ENCODE measurements at regions of chr16 and their contacts with region 1.

Region 1: GRCh38 chr16:70523076-70523742 is at the start of gene COG4:
- DNase-seq: peak; percentile 88 to 93 (median 90)
- ATAC-seq: peak; percentile 75
- H3K4me3 ChIP-seq: peak within 1 kb of the TSS; percentile 75
- H3K27ac ChIP-seq: peak within 1 kb of the TSS; percentile 89
- H3K4me1 ChIP-seq: peaks cover 2 to 18% of the 10 kb centered on the region in 2 experiments; a peak in 4 of 5 replicates
- H3K27me3 ChIP-seq: no peaks in the 10 kb centered on the region
- CTCF ChIP-seq: no peak
- EP300 ChIP-seq: no peak
- POLR2A ChIP-seq: peak; percentile 93
- RAD21 ChIP-seq: no peak
- polyA plus RNA-seq, gene COG4: 13.7 to 37.4 TPM

Region 2: GRCh38 chr16:70331588-70332358 is 191.4 kb before region 1 on chr16:
- CTCF ChIA-PET with region 1: no interaction called
- POLR2A ChIA-PET with region 1: no interaction called
- in situ Hi-C with region 1: no loop called
- intact Hi-C with region 1: no loop called
- DNase-seq: peak in 2 of 4 experiments; percentile 32 to 33
- ATAC-seq: peak; percentile 88
- H3K4me3 ChIP-seq: no peak overlapping the region
- H3K27ac ChIP-seq: no peak overlapping the region
- H3K4me1 ChIP-seq: peaks cover 4% of the 10 kb centered on the region in 2 experiments; a peak in 3 of 5 replicates
- H3K27me3 ChIP-seq: no peaks in the 10 kb centered on the region
- CTCF ChIP-seq: peak; percentile 54 to 60 (median 55)
- EP300 ChIP-seq: no peak
- POLR2A ChIP-seq: no peak
- RAD21 ChIP-seq: peak; percentile 53 to 72

Region 3: GRCh38 chr16:70345840-70346239 is 177.4 kb before region 1 on chr16:
- CTCF ChIA-PET with region 1: no interaction called
- POLR2A ChIA-PET with region 1: interaction called, 10 read pairs
- in situ Hi-C with region 1: no loop called
- intact Hi-C with region 1: no loop called
- DNase-seq: no peak
- ATAC-seq: no peak
- H3K4me3 ChIP-seq: peak overlapping the region; percentile 84
- H3K27ac ChIP-seq: peak overlapping the region; percentile 93
- H3K4me1 ChIP-seq: peaks cover 4 to 6% of the 10 kb centered on the region in 2 experiments; a peak in 4 of 5 replicates
- H3K27me3 ChIP-seq: no peaks in the 10 kb centered on the region
- CTCF ChIP-seq: no peak
- EP300 ChIP-seq: no peak
- POLR2A ChIP-seq: no peak
- RAD21 ChIP-seq: no peak

Region 4: DNA sequence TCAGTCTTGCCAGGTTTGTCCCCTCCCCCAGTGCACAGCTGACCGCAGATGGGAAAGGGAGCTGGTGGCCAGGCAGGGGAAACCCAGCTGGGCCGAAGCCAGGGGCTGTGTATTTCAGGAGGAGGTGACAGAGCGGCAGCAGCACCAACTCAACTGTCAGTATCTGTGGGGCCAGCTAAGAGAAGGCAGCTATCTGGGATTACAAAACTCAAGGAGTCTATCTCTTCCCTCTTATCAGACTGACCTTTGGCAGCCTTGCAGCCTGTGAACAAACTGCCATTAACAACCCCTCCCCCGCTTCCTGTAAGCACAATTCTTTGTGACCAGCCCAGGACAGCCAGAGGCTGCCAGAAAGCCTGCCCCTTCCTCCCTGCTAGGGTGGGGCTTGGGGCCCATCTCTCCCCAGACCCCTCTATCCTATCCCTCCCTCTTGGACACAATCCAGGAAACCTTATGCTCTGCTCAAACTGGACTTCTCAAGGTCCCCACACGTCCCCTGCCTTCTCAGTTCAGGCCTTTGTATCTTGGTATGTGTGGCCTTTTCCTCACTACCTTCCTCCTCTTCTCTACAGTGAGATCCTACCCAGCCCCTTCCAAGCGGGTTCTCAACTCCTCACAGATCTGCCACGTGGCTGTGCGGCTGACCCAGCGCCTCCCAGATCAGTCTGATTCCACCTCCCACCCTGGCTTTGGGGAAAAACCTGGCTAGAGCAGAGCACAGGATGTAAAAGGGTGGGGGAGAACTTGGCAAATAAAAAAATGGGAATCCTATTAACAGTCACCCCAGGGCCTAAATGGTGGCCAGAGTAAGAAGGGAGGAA is 94.8 kb before region 1 on chr16:
- CTCF ChIA-PET with region 1: no interaction called
- POLR2A ChIA-PET with region 1: interaction called, 7 read pairs
- in situ Hi-C with region 1: no loop called
- intact Hi-C with region 1: loop called (anchors 2 kb)
- DNase-seq: peak; percentile 90 to 99 (median 93)
- ATAC-seq: peak; percentile 83
- H3K4me3 ChIP-seq: no peak overlapping the region; the same call in 1 of the 2 replicates
- H3K27ac ChIP-seq: peak overlapping the region; percentile 98
- H3K4me1 ChIP-seq: peaks cover 75 to 78% of the 10 kb centered on the region in 2 experiments
- H3K27me3 ChIP-seq: no peaks in the 10 kb centered on the region
- CTCF ChIP-seq: no peak
- EP300 ChIP-seq: peak; percentile 100
- POLR2A ChIP-seq: peak; percentile 85
- RAD21 ChIP-seq: peak; percentile 41 to 50; a peak in 3 of 4 replicates

Region 5: GRCh38 chr16:70540994-70541393 is 17.8 kb after region 1 on chr16:
- CTCF ChIA-PET with region 1: no interaction called
- POLR2A ChIA-PET with region 1: interaction called, 14 read pairs
- in situ Hi-C with region 1: no loop called
- intact Hi-C with region 1: no loop called
- DNase-seq: no peak
- ATAC-seq: no peak
- H3K4me3 ChIP-seq: no peak overlapping the region
- H3K27ac ChIP-seq: no peak overlapping the region
- H3K4me1 ChIP-seq: no peaks in the 10 kb centered on the region
- H3K27me3 ChIP-seq: no peaks in the 10 kb centered on the region
- CTCF ChIP-seq: no peak
- EP300 ChIP-seq: no peak
- POLR2A ChIP-seq: no peak
- RAD21 ChIP-seq: no peak

Region 6: GRCh38 chr16:70582290-70582978 is 59.2 kb after region 1 on chr16:
- CTCF ChIA-PET with region 1: no interaction called
- POLR2A ChIA-PET with region 1: no interaction called
- in situ Hi-C with region 1: no loop called
- intact Hi-C with region 1: no loop called
- DNase-seq: peak in 2 of 4 experiments; percentile 42 to 52
- ATAC-seq: peak; percentile 76
- H3K4me3 ChIP-seq: no peak overlapping the region
- H3K27ac ChIP-seq: no peak overlapping the region
- H3K4me1 ChIP-seq: peaks cover 5 to 8% of the 10 kb centered on the region in 2 experiments; a peak in 3 of 5 replicates
- H3K27me3 ChIP-seq: peaks cover 0 to 16% of the 10 kb centered on the region in 2 experiments; a peak in 3 of 5 replicates
- CTCF ChIP-seq: peak; percentile 49 to 77 (median 66)
- EP300 ChIP-seq: no peak
- POLR2A ChIP-seq: no peak
- RAD21 ChIP-seq: peak in 1 of 2 experiments; percentile 72; a peak in 3 of 4 replicates

Region 7: GRCh38 chr16:70653809-70654771 is 130.9 kb after region 1 on chr16:
- CTCF ChIA-PET with region 1: interaction called, 5 read pairs
- POLR2A ChIA-PET with region 1: no interaction called
- in situ Hi-C with region 1: no loop called
- intact Hi-C with region 1: loop called (anchors 10 kb)
- DNase-seq: peak; percentile 75 to 91 (median 81)
- ATAC-seq: peak; percentile 93
- H3K4me3 ChIP-seq: peak overlapping the region; percentile 7
- H3K27ac ChIP-seq: peak overlapping the region; percentile 69; the same call in 2 of the 3 replicates
- H3K4me1 ChIP-seq: peaks cover 6 to 24% of the 10 kb centered on the region in 2 experiments
- H3K27me3 ChIP-seq: peaks cover 0 to 4% of the 10 kb centered on the region in 2 experiments; a peak in 1 of 5 replicates
- CTCF ChIP-seq: peak; percentile 82 to 97 (median 93)
- EP300 ChIP-seq: peak; percentile 36
- POLR2A ChIP-seq: no peak
- RAD21 ChIP-seq: peak; percentile 95 to 96